PC-9 (cell line): ENCODE measurements at regions of chr19 and their contacts with region 1.

Region 1: GRCh38 chr19:23273590-23274413 is 23.6 kb upstream of the ZNF724 start:
- DNase-seq: peak; percentile 89 to 93
- H3K4me3 ChIP-seq: peak overlapping the region; percentile 95
- H3K27ac ChIP-seq: peak overlapping the region; percentile 37
- H3K4me1 ChIP-seq: peaks cover 6% of the 10 kb centered on the region
- H3K27me3 ChIP-seq: no peaks in the 10 kb centered on the region
- CTCF ChIP-seq: no peak

Region 2: GRCh38 chr19:23203841-23204344 is 69.9 kb before region 1 on chr19:
- CTCF ChIA-PET with region 1: no interaction called
- POLR2A ChIA-PET with region 1: no interaction called
- intact Hi-C with region 1: no loop called
- DNase-seq: no peak
- H3K4me3 ChIP-seq: no peak overlapping the region
- H3K27ac ChIP-seq: no peak overlapping the region
- H3K4me1 ChIP-seq: no peaks in the 10 kb centered on the region
- H3K27me3 ChIP-seq: no peaks in the 10 kb centered on the region
- CTCF ChIP-seq: no peak

Region 3: GRCh38 chr19:23249911-23250649 is 23.7 kb before region 1 on chr19 and contains the start of gene ZNF724:
- CTCF ChIA-PET with region 1: no interaction called
- POLR2A ChIA-PET with region 1: interaction called, 4 read pairs
- intact Hi-C with region 1: loop called (anchors 1 kb)
- DNase-seq: peak; percentile 94 to 97
- H3K4me3 ChIP-seq: peak within 1 kb of the TSS; percentile 76
- H3K27ac ChIP-seq: peak within 1 kb of the TSS; percentile 50
- H3K4me1 ChIP-seq: no peaks in the 10 kb centered on the region
- H3K27me3 ChIP-seq: no peaks in the 10 kb centered on the region
- CTCF ChIP-seq: no peak
- total RNA-seq, gene ZNF724: 8.4 and 8.7 TPM in 2 replicates

Region 4: DNA sequence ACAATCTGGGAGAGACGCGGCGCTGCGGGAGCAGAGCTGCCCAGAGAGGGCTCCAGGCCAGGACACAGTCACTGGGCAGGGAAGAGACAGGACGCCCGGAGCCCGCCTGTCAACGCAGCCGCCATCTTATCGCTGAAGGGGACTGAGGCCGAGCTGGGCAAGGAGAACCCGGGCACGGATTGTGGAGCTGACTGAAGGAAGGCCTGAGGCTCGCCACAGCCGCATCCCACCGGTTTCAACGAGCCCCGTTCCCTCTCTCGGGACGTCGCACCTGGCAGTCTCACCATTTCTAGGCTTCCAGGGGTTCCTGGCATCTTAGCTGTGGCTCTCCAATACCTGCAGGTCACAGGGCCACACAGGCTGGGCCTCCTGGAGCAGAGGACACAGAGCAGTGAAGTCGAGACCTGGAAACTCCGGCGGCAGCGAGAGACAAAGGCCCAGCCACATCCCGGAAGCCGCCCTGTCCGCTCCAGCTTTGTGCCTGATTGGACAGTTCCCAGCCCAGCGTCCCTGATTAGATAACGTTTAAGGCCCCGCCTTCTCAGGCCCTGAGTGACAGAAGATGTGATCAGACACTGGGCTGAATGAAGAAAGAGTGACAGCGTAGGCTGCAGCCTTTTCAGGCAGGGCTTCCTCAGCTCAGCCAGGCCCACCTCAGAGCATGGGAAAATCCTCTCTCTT is 121.4 kb after region 1 on chr19 and contains the start of gene ZNF91:
- CTCF ChIA-PET with region 1: no interaction called
- POLR2A ChIA-PET with region 1: no interaction called
- intact Hi-C with region 1: loop called (anchors 10 kb)
- DNase-seq: peak; percentile 92 to 94
- H3K4me3 ChIP-seq: peak within 1 kb of the TSS; percentile 88
- H3K27ac ChIP-seq: peak within 1 kb of the TSS; percentile 83
- H3K4me1 ChIP-seq: peaks cover 10% of the 10 kb centered on the region
- H3K27me3 ChIP-seq: no peaks in the 10 kb centered on the region
- CTCF ChIP-seq: no peak
- total RNA-seq, gene ZNF91: 37.4 and 44.9 TPM in 2 replicates